ENCODE measurements at regions of chr9 and their contacts with region 1.

Region 1: DNA sequence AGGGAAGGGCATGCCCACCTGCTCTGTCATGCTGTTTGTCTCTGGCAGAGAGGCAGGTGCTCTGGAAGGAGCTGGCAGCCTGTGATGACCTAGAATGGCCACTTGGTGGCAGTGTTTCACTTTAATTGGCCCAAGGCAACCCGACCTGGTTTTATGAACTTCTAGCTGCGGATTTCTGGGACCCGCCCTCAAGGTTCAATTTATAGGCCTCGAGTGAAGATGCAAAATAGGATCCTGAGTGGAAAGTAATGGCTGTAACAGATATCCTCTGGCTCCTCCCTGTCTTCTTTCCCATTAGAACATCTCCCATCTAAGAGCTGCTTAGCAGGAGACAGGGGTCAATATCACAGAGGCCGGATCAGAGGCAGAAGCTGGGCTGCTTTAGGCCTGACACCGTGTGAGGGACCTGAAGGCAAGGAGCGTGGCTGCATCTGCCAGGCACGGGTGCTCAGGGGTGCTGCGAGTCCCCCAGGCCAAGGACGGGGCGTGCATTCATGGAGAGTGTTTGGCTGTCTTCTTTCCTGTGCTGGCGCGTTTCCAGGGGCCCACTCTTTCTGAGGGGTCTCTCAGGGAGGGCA is 56.7 kb upstream of the SLC28A3 start:
- DNase-seq: no peak
- H3K4me3 ChIP-seq: no peak overlapping the region
- CTCF ChIP-seq: peak; percentile 81

Region 2: GRCh38 chr9:85258823-85259370 is 861.7 kb after region 1 on chr9:
- CTCF ChIA-PET with region 1: interaction called, 21 read pairs
- POLR2A ChIA-PET with region 1: no interaction called
- DNase-seq: peak; percentile 19
- H3K4me3 ChIP-seq: peak overlapping the region; percentile 20
- CTCF ChIP-seq: peak; percentile 90

Region 3: GRCh38 chr9:85425153-85425611 is 1027.9 kb after region 1 on chr9:
- CTCF ChIA-PET with region 1: interaction called, 17 read pairs
- POLR2A ChIA-PET with region 1: no interaction called
- DNase-seq: no peak
- H3K4me3 ChIP-seq: no peak overlapping the region
- CTCF ChIP-seq: peak; percentile 76

Measured in AG04449 (cell line).